IMR-90 (cell line): ENCODE measurements at regions of chr1 and their contacts with region 1.

Region 1: GRCh38 chr1:10209905-10210810 is at the start of gene KIF1B:
- DNase-seq: peak; percentile 97
- ATAC-seq: peak; percentile 95
- H3K4me3 ChIP-seq: peak within 1 kb of the TSS; percentile 72
- H3K27ac ChIP-seq: peak within 1 kb of the TSS; percentile 95
- H3K4me1 ChIP-seq: peaks cover 3% of the 10 kb centered on the region; the same call in 1 of the 2 replicates
- H3K27me3 ChIP-seq: no peaks in the 10 kb centered on the region
- CTCF ChIP-seq: peak; percentile 98
- POLR2A ChIP-seq: peak; percentile 95
- RAD21 ChIP-seq: peak; percentile 53
- total RNA-seq, gene KIF1B: 21.1 and 32.5 TPM in 2 replicates

Region 2: DNA sequence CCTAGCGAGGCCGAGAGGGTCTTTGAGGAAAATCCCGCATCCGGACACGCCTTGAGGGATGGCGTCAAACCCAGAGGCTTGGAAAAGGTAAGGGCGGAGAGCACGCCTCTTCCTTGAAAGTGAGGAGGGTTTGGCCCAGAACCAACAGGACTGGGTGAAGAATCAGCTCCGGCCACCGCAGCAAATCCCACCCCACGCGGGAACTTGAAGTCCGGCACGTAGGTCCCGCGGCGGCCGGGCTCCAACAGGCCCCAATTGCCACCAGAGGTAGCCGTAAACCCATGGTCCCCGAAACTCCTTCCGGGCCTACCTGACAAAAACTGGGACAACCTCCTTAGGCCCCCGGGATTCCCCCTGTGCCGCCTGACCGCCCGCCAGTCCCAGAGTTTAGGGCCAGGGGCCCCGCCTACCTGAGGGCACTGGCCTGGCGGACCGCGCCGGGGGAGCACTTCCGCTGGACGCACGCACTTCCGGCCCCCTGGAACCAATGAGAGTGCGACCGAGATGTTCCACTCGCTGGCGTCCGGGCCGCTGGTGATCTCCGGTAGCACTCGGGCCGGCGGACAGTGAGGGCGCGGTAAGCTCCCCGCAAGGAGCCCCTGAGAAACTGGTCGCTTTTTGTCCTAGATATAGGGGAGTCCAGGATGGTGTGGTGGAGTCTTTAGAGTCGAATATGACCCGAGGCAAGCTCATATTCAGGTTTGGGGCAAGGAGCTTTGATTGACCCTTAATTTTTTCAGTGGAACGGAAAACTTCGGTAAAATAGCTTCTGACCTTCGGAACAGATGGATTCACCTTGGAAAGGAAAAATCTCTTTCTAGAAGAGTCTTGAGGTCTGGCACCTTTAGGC is 267.0 kb before region 1 on chr1 and contains the starts of genes LZIC and NMNAT1:
- CTCF ChIA-PET with region 1: no interaction called
- POLR2A ChIA-PET with region 1: no interaction called
- dilution Hi-C with region 1: no loop called
- in situ Hi-C with region 1: no loop called
- intact Hi-C with region 1: loop called (anchors 5 kb)
- DNase-seq: peak; percentile 93
- ATAC-seq: peak; percentile 95
- H3K4me3 ChIP-seq: peak within 1 kb of the TSS; percentile 85
- H3K27ac ChIP-seq: peak within 1 kb of the TSS; percentile 79
- H3K4me1 ChIP-seq: no peaks in the 10 kb centered on the region
- H3K27me3 ChIP-seq: no peaks in the 10 kb centered on the region
- CTCF ChIP-seq: no peak
- POLR2A ChIP-seq: peak; percentile 98
- RAD21 ChIP-seq: no peak; the same call in 1 of the 2 replicates
- total RNA-seq, gene LZIC: 19.0 and 37.2 TPM in 2 replicates
- total RNA-seq, gene NMNAT1: 11.7 and 11.9 TPM in 2 replicates

Region 3: DNA sequence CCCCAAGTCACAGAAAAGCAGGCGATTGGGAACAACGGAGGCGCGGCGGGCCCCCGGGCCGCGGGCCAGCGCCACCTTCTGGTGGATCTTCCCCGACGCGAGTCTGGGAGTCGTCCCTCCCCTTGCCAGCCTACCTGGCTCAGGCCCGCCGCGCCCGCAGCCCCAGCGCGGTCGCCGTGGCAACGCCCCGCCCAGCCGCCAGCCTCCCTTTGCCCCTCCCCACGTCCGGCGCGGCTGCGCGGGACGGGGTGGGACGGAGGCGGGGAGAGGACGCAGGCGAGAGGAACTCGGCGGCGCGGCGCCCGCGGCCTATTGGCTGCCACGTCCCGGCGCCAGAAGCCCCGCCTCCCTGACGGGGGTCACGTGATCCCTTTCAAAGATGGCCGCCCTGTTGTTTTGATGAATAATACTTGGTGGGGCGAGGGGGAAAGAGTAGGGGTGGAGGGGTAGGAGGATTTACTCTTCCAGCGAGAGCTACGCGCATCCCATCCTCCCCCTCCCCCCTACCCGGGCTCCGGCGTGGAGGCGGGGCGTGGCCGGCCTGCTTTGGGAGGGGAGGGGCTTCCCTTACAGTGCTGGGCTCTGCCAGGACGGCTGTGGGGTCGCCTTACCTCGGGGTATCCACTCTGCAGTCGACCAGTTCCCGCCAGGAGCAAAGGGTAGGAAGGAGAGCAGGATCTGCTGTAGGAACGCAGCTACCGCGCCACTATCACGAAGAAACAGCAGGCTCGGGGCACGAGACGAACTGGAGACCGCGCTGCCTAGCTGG is 177.4 kb before region 1 on chr1 and contains the start of gene UBE4B:
- CTCF ChIA-PET with region 1: no interaction called
- POLR2A ChIA-PET with region 1: no interaction called
- dilution Hi-C with region 1: no loop called
- in situ Hi-C with region 1: no loop called
- intact Hi-C with region 1: loop called (anchors 5 kb)
- DNase-seq: peak; percentile 97
- ATAC-seq: peak; percentile 98
- H3K4me3 ChIP-seq: peak within 1 kb of the TSS; percentile 70
- H3K27ac ChIP-seq: peak within 1 kb of the TSS; percentile 84
- H3K4me1 ChIP-seq: peaks cover 6% of the 10 kb centered on the region; the same call in 1 of the 2 replicates
- H3K27me3 ChIP-seq: no peaks in the 10 kb centered on the region
- CTCF ChIP-seq: peak; percentile 87
- POLR2A ChIP-seq: no peak; the same call in 1 of the 2 replicates
- RAD21 ChIP-seq: peak; percentile 74
- total RNA-seq, gene UBE4B: 39.3 and 41.9 TPM in 2 replicates

Region 4: DNA sequence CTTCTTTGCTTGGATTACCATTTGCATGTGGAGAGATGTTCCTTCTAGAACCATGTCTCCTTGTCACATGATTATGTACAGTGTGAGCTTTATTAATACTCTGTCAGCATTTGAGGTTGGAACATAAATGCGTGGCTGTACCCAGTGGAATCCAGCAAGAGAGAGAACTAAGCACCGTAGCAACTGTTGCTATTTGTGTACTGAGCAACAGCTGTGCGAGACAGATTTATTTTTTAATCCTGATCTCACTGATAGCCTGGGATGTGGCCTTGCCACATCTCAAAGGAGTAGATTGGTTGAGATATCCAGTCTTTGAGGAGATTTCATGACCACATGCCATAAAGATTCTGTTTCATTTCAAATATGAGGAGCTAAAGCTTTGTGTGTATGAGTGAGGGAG is 43.6 kb after region 1 on chr1:
- CTCF ChIA-PET with region 1: interaction called, 12 read pairs
- POLR2A ChIA-PET with region 1: no interaction called
- dilution Hi-C with region 1: no loop called
- in situ Hi-C with region 1: no loop called
- intact Hi-C with region 1: loop called (anchors 2 kb)
- DNase-seq: peak; percentile 90
- ATAC-seq: peak; percentile 90
- H3K4me3 ChIP-seq: no peak overlapping the region
- H3K27ac ChIP-seq: no peak overlapping the region
- H3K4me1 ChIP-seq: peaks cover 7% of the 10 kb centered on the region; the same call in 1 of the 2 replicates
- H3K27me3 ChIP-seq: no peaks in the 10 kb centered on the region
- CTCF ChIP-seq: no peak
- POLR2A ChIP-seq: no peak
- RAD21 ChIP-seq: no peak

Region 5: GRCh38 chr1:10280439-10281350 is 70.5 kb after region 1 on chr1:
- CTCF ChIA-PET with region 1: interaction called, 5 read pairs
- POLR2A ChIA-PET with region 1: no interaction called
- dilution Hi-C with region 1: no loop called
- in situ Hi-C with region 1: no loop called
- intact Hi-C with region 1: loop called (anchors 1 kb)
- DNase-seq: peak; percentile 68
- ATAC-seq: peak; percentile 95
- H3K4me3 ChIP-seq: no peak overlapping the region
- H3K27ac ChIP-seq: peak overlapping the region; percentile 34; the same call in 1 of the 2 replicates
- H3K4me1 ChIP-seq: peaks cover 4% of the 10 kb centered on the region
- H3K27me3 ChIP-seq: no peaks in the 10 kb centered on the region
- CTCF ChIP-seq: no peak
- POLR2A ChIP-seq: no peak
- RAD21 ChIP-seq: no peak

Region 6: DNA sequence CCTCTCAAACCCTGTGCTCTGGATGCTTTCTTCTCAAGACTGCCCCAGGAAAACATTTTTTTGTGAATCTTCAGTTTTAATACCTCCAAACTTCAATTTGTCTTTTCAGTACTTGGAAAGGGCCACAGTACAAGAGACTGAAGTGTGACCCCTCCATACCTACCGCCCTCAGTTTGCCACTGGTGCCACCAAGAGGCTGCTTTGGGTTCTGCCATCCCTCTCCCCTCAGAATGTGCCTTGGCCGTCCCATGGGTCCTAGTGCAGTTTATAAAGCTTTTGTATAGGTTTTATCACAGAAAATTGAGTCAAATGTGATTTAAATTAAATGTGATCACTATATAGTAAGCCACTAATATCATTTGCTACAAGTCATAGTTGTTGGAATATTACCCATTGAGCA is 127.9 kb after region 1 on chr1:
- CTCF ChIA-PET with region 1: interaction called, 8 read pairs
- POLR2A ChIA-PET with region 1: no interaction called
- dilution Hi-C with region 1: no loop called
- in situ Hi-C with region 1: no loop called
- intact Hi-C with region 1: loop called (anchors 1 kb)
- DNase-seq: peak; percentile 34
- ATAC-seq: peak; percentile 85
- H3K4me3 ChIP-seq: no peak overlapping the region
- H3K27ac ChIP-seq: no peak overlapping the region
- H3K4me1 ChIP-seq: peaks cover 5% of the 10 kb centered on the region
- H3K27me3 ChIP-seq: no peaks in the 10 kb centered on the region
- CTCF ChIP-seq: peak; percentile 62
- POLR2A ChIP-seq: no peak
- RAD21 ChIP-seq: peak; percentile 71

Region 7: DNA sequence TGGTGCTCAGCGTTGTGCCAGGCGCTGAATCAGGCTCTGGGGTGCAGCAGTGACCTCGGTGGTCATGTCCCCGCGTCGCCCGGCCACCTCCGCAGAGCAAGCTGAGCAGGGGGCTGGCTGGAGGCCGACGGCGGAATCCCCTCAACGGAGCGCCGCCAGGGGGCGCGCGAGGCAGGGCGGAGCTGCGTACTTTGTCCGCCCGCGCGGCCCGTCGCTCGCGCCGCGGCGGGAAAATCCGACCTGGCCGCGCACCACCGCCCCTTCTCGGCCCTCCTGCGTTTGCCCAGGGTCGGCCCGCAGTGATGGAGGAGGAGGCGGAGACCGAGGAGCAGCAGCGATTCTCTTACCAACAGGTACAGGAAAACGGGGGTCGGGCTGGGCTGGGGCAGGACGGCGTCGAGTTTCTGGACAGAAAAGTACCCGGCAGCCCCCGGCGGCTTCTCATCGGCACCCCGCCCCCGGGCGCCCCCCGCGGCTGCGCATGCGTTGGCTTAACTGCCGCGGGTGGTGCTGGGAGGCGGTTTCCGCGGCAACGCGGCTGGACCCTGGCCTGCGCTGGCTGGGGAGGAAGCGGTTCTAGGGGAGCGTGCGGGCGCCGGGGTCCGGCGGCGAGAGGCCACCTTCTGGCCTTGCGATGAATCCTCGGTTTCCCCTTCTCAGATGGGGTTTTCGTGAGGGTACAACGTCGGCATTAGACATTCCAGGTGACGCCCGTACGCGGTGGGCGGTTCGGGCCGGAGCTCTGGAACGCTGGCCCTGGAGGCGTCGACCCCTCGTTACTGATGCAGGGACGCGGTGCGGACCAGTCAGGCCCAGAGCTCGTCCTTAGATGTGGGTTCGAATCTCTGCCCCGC is 220.3 kb after region 1 on chr1 and contains the start of gene CENPS:
- CTCF ChIA-PET with region 1: no interaction called
- POLR2A ChIA-PET with region 1: no interaction called
- dilution Hi-C with region 1: no loop called
- in situ Hi-C with region 1: no loop called
- intact Hi-C with region 1: loop called (anchors 1 kb)
- DNase-seq: peak; percentile 83
- ATAC-seq: peak; percentile 95
- H3K4me3 ChIP-seq: peak within 1 kb of the TSS; percentile 76
- H3K27ac ChIP-seq: peak within 1 kb of the TSS; percentile 86
- H3K4me1 ChIP-seq: peaks cover 2% of the 10 kb centered on the region; the same call in 1 of the 2 replicates
- H3K27me3 ChIP-seq: no peaks in the 10 kb centered on the region
- CTCF ChIP-seq: peak; percentile 98
- POLR2A ChIP-seq: no peak; the same call in 1 of the 2 replicates
- RAD21 ChIP-seq: peak; percentile 66
- total RNA-seq, gene CENPS: 9.9 and 11.4 TPM in 2 replicates